A673 (cell line): ENCODE measurements at regions of chr19 and their contacts with region 1.

Region 1: DNA sequence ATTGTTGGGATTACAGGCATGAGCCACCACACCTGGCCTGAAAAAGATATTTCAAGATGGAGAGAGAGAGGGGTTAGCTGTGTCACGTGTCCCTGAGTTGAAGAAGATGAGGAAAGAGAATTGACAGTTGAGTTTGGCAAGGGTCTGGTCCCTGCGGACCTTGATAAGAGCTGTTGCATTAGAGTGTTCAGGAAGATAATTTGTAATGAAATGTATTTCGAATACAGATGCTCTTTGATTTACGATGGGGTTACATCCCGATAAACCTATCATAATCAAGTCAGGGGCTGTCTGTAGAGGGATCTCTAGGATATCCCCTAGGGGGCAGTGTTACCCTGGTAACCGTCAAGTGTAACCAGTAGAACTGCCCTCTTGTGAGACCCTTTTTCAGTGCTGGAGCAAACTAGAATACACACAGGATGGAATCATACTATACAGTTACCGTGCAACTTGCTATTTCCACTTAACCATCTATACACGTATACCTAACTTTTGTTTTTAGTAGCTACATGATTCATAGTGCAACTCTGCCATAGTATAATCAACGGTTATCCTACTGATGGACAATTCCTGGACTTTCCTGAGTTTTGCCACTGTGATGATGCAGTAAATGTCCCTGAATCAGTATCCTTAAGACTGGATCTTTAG is 1.5 kb upstream of the ELOF1 start:
- DNase-seq: peak; percentile 92
- H3K4me3 ChIP-seq: peak overlapping the region; percentile 95
- H3K27ac ChIP-seq: no peak overlapping the region
- H3K4me1 ChIP-seq: peaks cover 13% of the 10 kb centered on the region
- H3K27me3 ChIP-seq: no peaks in the 10 kb centered on the region
- CTCF ChIP-seq: peak; percentile 86

Region 2: DNA sequence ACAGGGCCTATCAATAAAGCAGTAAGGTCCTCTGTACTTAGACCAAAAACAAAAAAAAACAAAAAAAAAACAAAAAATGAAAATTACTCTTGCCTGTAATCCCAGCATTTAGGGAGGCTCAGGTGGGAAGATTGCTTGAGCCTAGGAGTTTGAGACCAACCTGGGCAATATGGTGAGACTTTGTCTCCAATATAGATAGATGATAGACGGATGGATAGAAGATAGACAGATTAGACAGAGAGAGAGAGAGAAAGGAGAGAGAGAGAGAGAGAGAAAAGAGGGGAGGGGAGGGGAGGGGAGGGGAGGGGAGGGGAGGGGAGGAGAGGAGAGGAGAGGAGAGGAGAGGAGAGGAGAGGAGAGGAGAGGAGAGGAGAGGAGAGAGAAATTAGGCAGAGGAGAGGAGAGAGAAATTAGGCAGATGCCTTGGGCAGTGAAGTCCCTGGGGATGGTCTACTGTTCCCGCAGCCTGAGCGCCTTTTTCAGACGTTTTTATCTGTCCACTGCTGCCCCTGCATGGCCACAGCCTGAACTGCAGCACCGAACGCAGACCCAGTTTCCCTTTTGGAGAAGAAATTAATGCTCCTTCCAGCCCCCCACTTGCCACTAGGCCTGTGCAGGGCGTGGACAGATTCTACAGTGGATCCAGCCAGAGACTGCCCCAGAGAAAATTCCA is 26.9 kb after region 1 on chr19:
- CTCF ChIA-PET with region 1: no interaction called
- POLR2A ChIA-PET with region 1: no interaction called
- intact Hi-C with region 1: loop called (anchors 2 kb)
- DNase-seq: peak; percentile 89
- H3K4me3 ChIP-seq: no peak overlapping the region
- H3K27ac ChIP-seq: no peak overlapping the region
- H3K4me1 ChIP-seq: no peaks in the 10 kb centered on the region
- H3K27me3 ChIP-seq: no peaks in the 10 kb centered on the region
- CTCF ChIP-seq: peak; percentile 92

Region 3: DNA sequence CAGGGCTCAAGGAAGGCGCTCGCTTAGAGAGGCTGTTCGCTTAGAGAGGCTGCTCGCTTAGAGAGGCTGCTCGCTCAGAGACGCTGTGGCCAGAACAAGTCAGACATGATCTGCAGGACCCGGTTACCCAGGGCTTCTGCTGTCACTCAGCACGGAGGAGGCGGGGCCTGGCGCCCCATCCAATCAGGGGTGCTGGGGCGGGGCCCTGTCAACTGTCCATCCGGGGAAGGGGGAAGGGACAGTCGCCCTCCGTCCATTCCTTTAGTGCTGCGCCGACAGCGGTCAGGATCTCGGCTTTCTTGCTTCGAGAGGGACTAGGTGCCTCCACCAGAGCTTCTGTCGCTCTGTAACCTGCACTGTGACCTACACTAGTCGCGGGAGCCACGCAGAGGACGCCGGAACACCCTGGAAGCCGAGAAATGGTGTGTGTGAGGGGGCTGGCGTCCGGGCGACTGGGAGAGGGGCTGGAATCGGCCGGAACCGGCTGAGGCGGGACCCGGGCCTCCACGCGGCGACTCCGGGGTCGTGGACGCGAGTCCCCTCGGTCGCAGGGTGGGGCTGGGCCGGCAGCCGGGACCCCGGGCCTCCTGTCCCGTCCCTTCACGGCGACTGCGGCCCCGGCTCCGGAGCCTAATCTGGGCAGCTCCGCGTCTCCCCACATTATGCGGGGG is 253.6 kb after region 1 on chr19 and contains the start of gene ZNF440:
- CTCF ChIA-PET with region 1: no interaction called
- POLR2A ChIA-PET with region 1: no interaction called
- intact Hi-C with region 1: loop called (anchors 5 kb)
- DNase-seq: peak; percentile 89
- H3K4me3 ChIP-seq: peak within 1 kb of the TSS; percentile 89
- H3K27ac ChIP-seq: peak within 1 kb of the TSS; percentile 67
- H3K4me1 ChIP-seq: no peaks in the 10 kb centered on the region
- H3K27me3 ChIP-seq: no peaks in the 10 kb centered on the region
- CTCF ChIP-seq: no peak
- total RNA-seq, gene ZNF440: 7.1 and 9.2 TPM in 2 replicates